ENCODE measurements at regions of chr6 and their contacts with region 1.

Region 1: GRCh38 chr6:117555882-117556498 is 46.3 kb downstream of the GOPC start:
- DNase-seq: no peak
- ATAC-seq: peak; percentile 45
- H3K4me3 Mint-ChIP-seq: no peak overlapping the region
- H3K27ac Mint-ChIP-seq: no peak overlapping the region
- H3K4me1 Mint-ChIP-seq: peaks cover 2% of the 10 kb centered on the region
- H3K27me3 Mint-ChIP-seq: peaks cover 2% of the 10 kb centered on the region
- CTCF ChIP-seq: peak; percentile 82

Region 2: DNA sequence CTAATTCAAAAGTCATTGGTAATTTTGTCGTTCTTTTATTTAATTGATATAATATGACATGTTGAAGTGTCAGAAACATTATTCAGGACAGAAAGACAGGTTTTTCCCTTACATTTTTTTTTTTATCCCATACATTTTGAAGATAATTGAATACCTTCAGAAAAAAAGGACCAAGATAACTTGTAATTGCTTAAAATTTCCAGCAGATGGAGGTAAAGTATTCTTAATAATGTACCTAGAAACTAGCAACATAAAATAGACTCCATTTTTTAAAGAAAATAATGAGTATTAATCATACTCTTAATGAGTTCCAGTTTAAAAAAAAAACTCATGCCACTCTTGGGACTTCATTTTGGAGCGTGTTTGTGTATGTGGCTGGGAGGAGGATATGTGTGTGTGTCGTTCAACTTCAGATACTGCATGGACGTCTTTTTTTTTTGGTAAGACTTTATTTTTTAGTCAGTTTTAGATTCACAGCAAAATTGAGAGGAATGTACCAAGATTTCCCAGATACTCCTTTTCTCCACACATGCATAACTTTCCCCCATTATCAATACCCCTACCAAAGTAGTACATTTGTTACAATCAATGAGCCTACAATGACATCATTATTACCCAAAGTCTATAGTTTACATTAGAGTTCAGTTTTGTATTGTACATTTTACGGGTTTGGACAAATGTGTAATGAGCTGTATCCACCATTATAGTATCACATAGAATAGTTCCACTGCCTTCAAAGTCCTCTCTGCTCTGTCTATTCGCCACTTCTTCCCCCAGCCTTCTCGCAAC is 209.7 kb before region 1 on chr6:
- CTCF ChIA-PET with region 1: no interaction called
- POLR2A ChIA-PET with region 1: no interaction called
- intact Hi-C with region 1: loop called (anchors 1 kb)
- DNase-seq: no peak
- ATAC-seq: no peak
- H3K4me3 Mint-ChIP-seq: no peak overlapping the region
- H3K27ac Mint-ChIP-seq: no peak overlapping the region
- H3K4me1 Mint-ChIP-seq: no peaks in the 10 kb centered on the region
- H3K27me3 Mint-ChIP-seq: peaks cover 1% of the 10 kb centered on the region
- CTCF ChIP-seq: no peak

Region 3: GRCh38 chr6:117399924-117400323 is 156.1 kb before region 1 on chr6:
- CTCF ChIA-PET with region 1: no interaction called
- POLR2A ChIA-PET with region 1: no interaction called
- intact Hi-C with region 1: loop called (anchors 1 kb)
- DNase-seq: no peak
- ATAC-seq: no peak
- H3K4me3 Mint-ChIP-seq: no peak overlapping the region
- H3K27ac Mint-ChIP-seq: no peak overlapping the region
- H3K4me1 Mint-ChIP-seq: no peaks in the 10 kb centered on the region
- H3K27me3 Mint-ChIP-seq: peaks cover 2% of the 10 kb centered on the region
- CTCF ChIP-seq: no peak

Region 4: GRCh38 chr6:117449549-117450439 is 106.2 kb before region 1 on chr6:
- CTCF ChIA-PET with region 1: interaction called, 45 read pairs
- POLR2A ChIA-PET with region 1: no interaction called
- intact Hi-C with region 1: loop called (anchors 1 kb)
- DNase-seq: no peak
- ATAC-seq: peak; percentile 34
- H3K4me3 Mint-ChIP-seq: no peak overlapping the region
- H3K27ac Mint-ChIP-seq: no peak overlapping the region
- H3K4me1 Mint-ChIP-seq: no peaks in the 10 kb centered on the region
- H3K27me3 Mint-ChIP-seq: peaks cover 17% of the 10 kb centered on the region
- CTCF ChIP-seq: no peak

Region 5: DNA sequence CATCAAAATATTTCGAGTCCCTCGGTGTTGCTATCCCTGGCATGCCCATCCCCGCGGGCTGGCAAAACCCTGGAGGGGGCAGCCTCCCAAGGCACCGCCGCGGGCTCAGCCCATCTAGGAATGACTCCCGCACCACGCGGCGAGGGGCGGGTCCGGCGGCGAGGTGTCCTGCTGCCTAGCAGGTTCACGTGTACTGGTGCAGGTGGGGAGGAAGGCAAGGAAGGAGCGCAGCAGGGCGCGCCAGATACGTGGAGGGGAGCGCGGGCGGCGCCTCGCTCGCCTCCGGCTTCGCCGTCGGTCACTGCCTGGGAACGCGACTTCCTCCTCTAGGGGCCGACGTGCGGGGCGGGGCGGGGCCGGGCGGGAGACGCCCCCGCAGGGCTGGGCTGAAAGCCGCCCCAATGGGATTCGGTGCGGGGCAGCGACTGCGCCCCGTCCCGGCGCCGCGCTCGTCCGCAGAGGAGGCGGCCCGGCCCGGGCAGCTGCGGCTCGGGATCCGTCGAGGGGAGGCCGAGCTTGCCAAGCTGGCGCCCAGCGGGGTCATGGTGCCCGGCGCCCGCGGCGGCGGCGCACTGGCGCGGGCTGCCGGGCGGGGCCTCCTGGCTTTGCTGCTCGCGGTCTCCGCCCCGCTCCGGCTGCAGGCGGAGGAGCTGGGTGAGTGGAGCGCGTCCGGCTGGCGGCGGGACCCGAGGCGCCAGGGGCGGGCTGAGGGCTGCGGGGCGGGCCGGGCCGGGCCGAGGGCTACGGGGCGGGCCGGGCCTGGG is 73.6 kb before region 1 on chr6 and contains the start of gene DCBLD1:
- CTCF ChIA-PET with region 1: no interaction called
- POLR2A ChIA-PET with region 1: no interaction called
- intact Hi-C with region 1: loop called (anchors 1 kb)
- DNase-seq: peak; percentile 50
- ATAC-seq: peak; percentile 89
- H3K4me3 Mint-ChIP-seq: peak within 1 kb of the TSS; percentile 79
- H3K27ac Mint-ChIP-seq: no peak within 1 kb of the TSS
- H3K4me1 Mint-ChIP-seq: peaks cover 17% of the 10 kb centered on the region
- H3K27me3 Mint-ChIP-seq: peaks cover 42% of the 10 kb centered on the region
- CTCF ChIP-seq: no peak
- total RNA-seq, gene DCBLD1: 0.15 and 0.31 TPM in 2 replicates

Region 6: GRCh38 chr6:117592983-117593766 is 37.2 kb after region 1 on chr6:
- CTCF ChIA-PET with region 1: no interaction called
- POLR2A ChIA-PET with region 1: no interaction called
- intact Hi-C with region 1: no loop called
- DNase-seq: no peak
- ATAC-seq: no peak
- H3K4me3 Mint-ChIP-seq: no peak overlapping the region
- H3K27ac Mint-ChIP-seq: no peak overlapping the region
- H3K4me1 Mint-ChIP-seq: peaks cover 19% of the 10 kb centered on the region
- H3K27me3 Mint-ChIP-seq: no peaks in the 10 kb centered on the region
- CTCF ChIP-seq: no peak

Measured in activated B cell treated with CpG ODN at 0.5 μM for 24 hours (primary cell).